Motor neuron (in vitro differentiated cells): ENCODE measurements at regions of chr9 and their contacts with region 1.

Region 1: GRCh38 chr9:15277400-15278090 is 29.5 kb downstream of the TTC39B start:
- ATAC-seq: peak in 4 of 8 experiments; percentile 30 to 72 (median 60)
- H3K4me3 ChIP-seq: no peak overlapping the region
- H3K27ac ChIP-seq: no peak overlapping the region
- H3K4me1 ChIP-seq: no peaks in the 10 kb centered on the region

Region 2: GRCh38 chr9:14924899-14925235 is 352.7 kb before region 1 on chr9:
- in situ Hi-C with region 1: no loop called
- ATAC-seq: peak in 2 of 8 experiments; percentile 83 to 88
- H3K4me3 ChIP-seq: no peak overlapping the region
- H3K27ac ChIP-seq: no peak overlapping the region
- H3K4me1 ChIP-seq: peaks cover 0 to 2% of the 10 kb centered on the region in 2 donors

Region 3: DNA sequence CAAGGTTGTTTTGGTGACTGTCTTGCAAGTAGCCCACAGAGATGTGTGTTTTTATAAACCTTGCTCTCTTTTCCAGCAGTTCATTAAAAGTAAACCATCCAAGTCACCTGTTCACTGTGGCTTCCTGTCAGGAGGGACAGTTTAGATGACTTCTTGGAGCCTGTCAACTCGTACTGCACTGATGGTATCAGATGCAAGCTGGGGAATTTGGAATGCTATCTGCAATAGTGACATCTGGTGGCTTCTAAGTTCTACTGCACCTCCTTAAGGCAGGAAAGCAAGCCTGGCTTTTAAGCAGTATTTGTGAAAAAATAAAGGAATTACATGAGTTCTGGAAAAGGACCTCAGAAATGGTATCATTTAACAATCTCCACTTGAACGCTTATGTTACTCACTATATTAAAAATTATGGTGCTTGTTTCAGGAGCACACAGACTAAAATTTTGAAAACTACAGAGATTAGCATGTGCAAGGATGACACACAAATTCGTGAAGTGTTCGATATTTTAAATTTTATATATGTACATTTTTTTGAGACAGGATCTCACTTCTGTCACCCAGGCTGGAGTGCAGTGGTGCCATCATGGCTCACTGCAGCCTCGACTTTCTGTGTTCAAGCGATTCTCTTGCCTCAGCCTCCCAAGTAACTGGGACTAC is 134.5 kb before region 1 on chr9:
- in situ Hi-C with region 1: no loop called
- ATAC-seq: peak in 5 of 8 experiments; percentile 52 to 85 (median 76)
- H3K4me3 ChIP-seq: no peak overlapping the region
- H3K27ac ChIP-seq: no peak overlapping the region
- H3K4me1 ChIP-seq: peaks cover 11% of the 10 kb centered on the region in 2 donors

Region 4: GRCh38 chr9:15422372-15423230 is 145.1 kb after region 1 on chr9 and contains the start of gene SNAPC3:
- in situ Hi-C with region 1: loop called in 1 of 9 experiments (anchors 25 kb)
- ATAC-seq: peak; percentile 93 to 98 (median 98)
- H3K4me3 ChIP-seq: peak within 1 kb of the TSS; percentile 75 to 91 (median 89)
- H3K27ac ChIP-seq: peak within 1 kb of the TSS; percentile 92 to 95
- H3K4me1 ChIP-seq: peaks cover 5 to 13% of the 10 kb centered on the region in 2 donors
- total RNA-seq, gene SNAPC3: 33.2 to 45.5 (median 40.2) TPM

Region 5: DNA sequence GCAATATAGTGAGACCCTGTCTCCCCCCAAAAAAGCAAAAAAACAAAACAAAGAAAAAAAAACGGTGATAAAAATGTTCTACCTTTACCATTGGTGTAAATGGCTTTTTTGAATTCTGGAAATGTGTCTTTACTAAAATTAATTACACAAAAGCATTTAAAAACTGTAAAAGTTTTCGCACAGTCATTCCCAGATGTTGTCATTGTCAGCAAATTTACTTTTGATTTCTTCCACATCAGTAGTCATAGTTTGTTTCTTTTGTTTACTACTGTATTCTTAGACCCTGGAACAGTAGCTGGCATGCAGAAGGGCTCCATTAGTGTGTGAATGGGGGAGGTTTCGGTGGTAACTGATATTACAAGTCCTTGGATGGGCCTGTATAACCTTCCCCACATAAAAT is 314.8 kb after region 1 on chr9:
- in situ Hi-C with region 1: no loop called
- ATAC-seq: no peak
- H3K4me3 ChIP-seq: no peak overlapping the region
- H3K27ac ChIP-seq: no peak overlapping the region
- H3K4me1 ChIP-seq: peaks cover 0 to 3% of the 10 kb centered on the region in 2 donors